ENCODE measurements at regions of chrX and their contacts with region 1.

Region 1: GRCh38 chrX:18425199-18426003 is at the start of gene CDKL5:
- H3K4me3 Mint-ChIP-seq: peak within 1 kb of the TSS; percentile 84
- H3K27ac Mint-ChIP-seq: peak within 1 kb of the TSS; percentile 79
- H3K4me1 Mint-ChIP-seq: peaks cover 7% of the 10 kb centered on the region
- H3K27me3 Mint-ChIP-seq: peaks cover 4% of the 10 kb centered on the region

Region 2: GRCh38 chrX:16719334-16720084 is 1705.9 kb before region 1 on chrX and contains the start of gene SYAP1:
- intact Hi-C with region 1: loop called (anchors 10 kb)
- H3K4me3 Mint-ChIP-seq: peak within 1 kb of the TSS; percentile 96
- H3K27ac Mint-ChIP-seq: peak within 1 kb of the TSS; percentile 97
- H3K4me1 Mint-ChIP-seq: peaks cover 5% of the 10 kb centered on the region
- H3K27me3 Mint-ChIP-seq: no peaks in the 10 kb centered on the region

Region 3: DNA sequence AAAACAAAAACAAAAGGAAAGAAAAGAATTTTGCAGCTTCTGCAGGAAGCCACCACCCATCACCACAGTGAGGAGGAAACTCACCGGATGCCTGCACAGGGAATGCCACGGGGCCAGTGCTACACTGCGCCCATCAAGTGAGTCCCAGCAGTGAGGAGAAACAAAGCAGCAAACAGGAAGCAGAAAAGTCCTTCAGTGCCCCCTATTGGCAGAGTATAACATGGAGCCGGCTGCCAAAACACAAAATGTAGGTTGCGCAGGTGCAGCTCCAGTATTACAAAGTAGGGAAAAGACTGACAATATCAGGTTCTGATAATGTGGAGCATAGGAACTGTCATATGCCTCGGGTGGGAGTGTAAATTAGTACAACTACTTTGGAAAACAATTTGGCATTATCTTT is 47.6 kb before region 1 on chrX:
- intact Hi-C with region 1: no loop called
- H3K4me3 Mint-ChIP-seq: no peak overlapping the region
- H3K27ac Mint-ChIP-seq: no peak overlapping the region
- H3K4me1 Mint-ChIP-seq: no peaks in the 10 kb centered on the region
- H3K27me3 Mint-ChIP-seq: peaks cover 4% of the 10 kb centered on the region

Region 4: GRCh38 chrX:18687856-18688495 is 262.6 kb after region 1 on chrX:
- intact Hi-C with region 1: loop called (anchors 5 kb)
- H3K4me3 Mint-ChIP-seq: no peak overlapping the region
- H3K27ac Mint-ChIP-seq: no peak overlapping the region
- H3K4me1 Mint-ChIP-seq: peaks cover 28% of the 10 kb centered on the region
- H3K27me3 Mint-ChIP-seq: peaks cover 2% of the 10 kb centered on the region

Region 5: GRCh38 chrX:18984381-18985185 is 559.2 kb after region 1 on chrX:
- intact Hi-C with region 1: loop called (anchors 10 kb)
- H3K4me3 Mint-ChIP-seq: peak overlapping the region; percentile 78
- H3K27ac Mint-ChIP-seq: peak overlapping the region; percentile 92
- H3K4me1 Mint-ChIP-seq: peaks cover 6% of the 10 kb centered on the region
- H3K27me3 Mint-ChIP-seq: no peaks in the 10 kb centered on the region

Region 6: GRCh38 chrX:19343535-19344408 is 918.4 kb after region 1 on chrX and contains the start of gene PDHA1:
- intact Hi-C with region 1: loop called (anchors 10 kb)
- H3K4me3 Mint-ChIP-seq: peak within 1 kb of the TSS; percentile 79
- H3K27ac Mint-ChIP-seq: peak within 1 kb of the TSS; percentile 86
- H3K4me1 Mint-ChIP-seq: peaks cover 21% of the 10 kb centered on the region
- H3K27me3 Mint-ChIP-seq: no peaks in the 10 kb centered on the region

Measured in dendritic cell treated with granulocyte-macrophage colony-stimulating factor and Interleukin-4, amounts not matched to agents 40 ng/mL and 50 ng/mL, for 4 days (primary cell).